ENCODE measurements at regions of chr21 and their contacts with region 1.

Region 1: GRCh38 chr21:45140346-45140940 is 66.1 kb downstream of the ADARB1 start:
- DNase-seq: peak; percentile 88

Region 2: GRCh38 chr21:44890338-44890931 is 250.0 kb before region 1 on chr21:
- CTCF ChIA-PET with region 1: no interaction called
- POLR2A ChIA-PET with region 1: no interaction called
- DNase-seq: no peak

Region 3: GRCh38 chr21:44939532-44940115 is 200.8 kb before region 1 on chr21 and contains the start of gene SLX9:
- CTCF ChIA-PET with region 1: interaction called, 14 read pairs
- POLR2A ChIA-PET with region 1: no interaction called
- DNase-seq: peak; percentile 98

Region 4: DNA sequence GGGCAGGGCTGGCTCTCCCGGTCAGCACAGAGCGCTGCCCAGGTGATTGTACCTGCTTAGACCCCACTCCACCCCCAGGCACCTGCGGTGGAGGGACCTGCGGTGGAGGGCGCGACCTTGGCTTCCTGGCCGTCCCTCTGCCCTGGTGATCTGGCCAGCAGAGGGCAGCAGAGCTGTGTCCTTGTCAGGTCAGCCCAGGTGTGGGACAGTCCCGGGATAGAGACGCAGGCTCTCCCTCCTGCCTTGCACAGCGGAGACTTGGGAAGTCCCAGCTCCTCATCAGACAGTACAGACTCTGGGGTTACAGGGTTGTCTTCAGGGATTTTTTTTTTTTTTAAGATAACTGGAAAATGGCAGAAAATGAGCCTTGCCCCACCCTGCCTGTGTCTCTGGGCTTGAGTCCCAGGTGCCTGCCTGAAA is 190.7 kb before region 1 on chr21:
- CTCF ChIA-PET with region 1: interaction called, 38 read pairs
- POLR2A ChIA-PET with region 1: no interaction called
- DNase-seq: peak; percentile 86

Region 5: GRCh38 chr21:45098867-45099266 is 41.6 kb before region 1 on chr21:
- CTCF ChIA-PET with region 1: interaction called, 20 read pairs
- POLR2A ChIA-PET with region 1: no interaction called
- DNase-seq: peak; percentile 54

Region 6: DNA sequence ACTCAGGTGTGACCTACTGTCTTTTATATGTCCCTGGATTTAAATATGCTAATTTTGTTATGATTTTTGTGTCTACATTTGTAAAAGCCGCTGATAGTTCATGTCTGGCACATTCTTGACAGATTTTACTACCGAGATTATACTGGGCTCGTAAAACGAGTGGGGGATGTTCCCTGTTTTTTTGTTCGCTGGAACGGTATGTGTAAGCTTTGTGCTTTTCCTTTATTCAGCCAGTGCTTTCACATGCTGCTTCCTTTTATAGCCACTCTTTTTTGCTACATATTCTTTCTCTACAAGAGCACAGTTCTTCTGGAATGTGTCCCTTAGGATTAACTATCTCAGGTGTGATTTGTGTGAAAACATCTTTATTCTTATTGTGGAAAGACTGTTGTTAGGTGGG is 19.5 kb before region 1 on chr21:
- CTCF ChIA-PET with region 1: interaction called, 24 read pairs
- POLR2A ChIA-PET with region 1: no interaction called
- DNase-seq: peak; percentile 50

Region 7: GRCh38 chr21:45130324-45130774 is 10.1 kb before region 1 on chr21:
- CTCF ChIA-PET with region 1: interaction called, 35 read pairs
- POLR2A ChIA-PET with region 1: no interaction called
- DNase-seq: no peak

Region 8: DNA sequence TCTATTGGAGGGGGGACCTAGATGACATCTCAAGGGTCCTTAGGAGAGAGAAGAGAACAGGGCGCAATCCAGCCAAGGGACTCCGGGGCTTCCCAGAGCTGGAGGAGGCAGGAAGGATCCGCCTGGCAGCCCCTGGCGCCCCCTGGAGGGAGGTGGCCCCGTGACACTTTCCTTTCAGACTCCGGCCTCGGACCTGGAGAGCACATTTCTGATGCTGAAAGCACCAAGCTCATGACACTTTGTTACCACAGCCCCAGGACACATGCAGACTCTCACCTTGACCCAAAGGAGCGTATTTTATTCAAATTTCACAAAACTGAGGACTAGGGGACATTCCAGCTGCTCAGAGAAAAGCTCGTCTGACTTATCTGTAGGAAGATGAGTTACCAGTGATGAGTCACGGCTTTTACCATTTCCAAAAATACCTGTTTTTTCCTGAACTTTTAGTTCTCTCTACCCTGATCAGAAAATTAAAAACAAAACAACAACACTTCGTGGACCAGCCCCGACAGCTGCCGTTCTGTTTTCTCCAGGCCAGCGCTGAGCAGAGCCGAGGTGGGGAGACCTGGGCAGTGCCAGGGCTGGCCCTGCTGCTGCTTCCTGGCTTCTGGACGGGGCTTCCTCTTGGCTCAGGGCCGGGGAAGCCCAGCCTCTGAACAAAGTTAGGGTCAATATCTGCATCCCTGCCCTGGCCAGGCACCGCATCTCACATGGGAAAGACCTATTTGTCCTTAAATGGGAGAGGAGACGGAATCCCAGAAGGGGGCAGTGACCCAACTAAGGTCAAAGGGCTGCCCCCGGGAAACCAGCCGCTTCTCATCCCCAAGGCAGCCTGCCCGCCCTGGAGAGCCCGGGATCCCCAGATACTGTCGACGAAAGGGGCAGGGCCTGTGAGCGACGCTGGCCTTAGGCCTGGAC is 168.9 kb after region 1 on chr21:
- CTCF ChIA-PET with region 1: interaction called, 12 read pairs
- POLR2A ChIA-PET with region 1: no interaction called
- DNase-seq: peak; percentile 87